GM10248 (cell line): ENCODE measurements at regions of chr14 and their contacts with region 1.

Region 1: GRCh38 chr14:24114536-24115450 is at the starts of genes DCAF11 and NRL:
- DNase-seq: peak; percentile 98
- CTCF ChIP-seq: no peak

Region 2: DNA sequence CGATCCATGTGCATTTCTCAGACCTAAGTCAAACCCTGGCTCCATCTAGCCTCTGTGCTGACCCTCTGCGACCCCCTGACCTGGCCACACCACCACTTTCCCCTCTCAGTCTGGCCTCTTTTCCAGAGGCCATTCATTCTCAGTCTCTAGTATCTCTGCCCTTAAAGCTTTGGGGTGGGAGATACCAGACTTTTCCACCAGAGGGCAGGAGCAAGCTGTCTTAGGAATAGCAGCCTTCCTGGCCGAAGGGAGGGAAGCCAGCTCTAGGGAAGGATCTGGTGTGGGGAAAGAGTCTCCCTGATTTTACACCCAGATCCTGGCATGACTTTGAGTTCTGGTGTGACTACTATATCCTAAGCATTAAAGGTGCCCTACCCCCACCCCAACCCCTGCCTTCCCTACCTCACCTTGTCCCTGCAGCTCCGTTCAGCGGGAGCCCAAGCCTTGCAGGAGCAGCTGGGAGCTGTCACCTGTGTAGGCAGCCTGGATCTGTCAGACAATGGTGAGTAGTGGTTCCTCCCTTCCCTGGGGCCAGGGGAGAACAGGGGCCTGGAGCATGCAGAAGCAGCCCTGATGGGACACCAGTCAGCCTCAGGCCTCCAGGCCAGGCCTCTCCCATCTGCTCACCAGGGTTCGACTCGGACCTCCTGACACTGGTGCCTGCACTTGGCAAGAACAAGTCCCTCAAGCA is 56.4 kb before region 1 on chr14:
- CTCF ChIA-PET with region 1: interaction called, 26 read pairs
- POLR2A ChIA-PET with region 1: interaction called, 3 read pairs
- DNase-seq: peak; percentile 70
- CTCF ChIP-seq: peak; percentile 73

Region 3: DNA sequence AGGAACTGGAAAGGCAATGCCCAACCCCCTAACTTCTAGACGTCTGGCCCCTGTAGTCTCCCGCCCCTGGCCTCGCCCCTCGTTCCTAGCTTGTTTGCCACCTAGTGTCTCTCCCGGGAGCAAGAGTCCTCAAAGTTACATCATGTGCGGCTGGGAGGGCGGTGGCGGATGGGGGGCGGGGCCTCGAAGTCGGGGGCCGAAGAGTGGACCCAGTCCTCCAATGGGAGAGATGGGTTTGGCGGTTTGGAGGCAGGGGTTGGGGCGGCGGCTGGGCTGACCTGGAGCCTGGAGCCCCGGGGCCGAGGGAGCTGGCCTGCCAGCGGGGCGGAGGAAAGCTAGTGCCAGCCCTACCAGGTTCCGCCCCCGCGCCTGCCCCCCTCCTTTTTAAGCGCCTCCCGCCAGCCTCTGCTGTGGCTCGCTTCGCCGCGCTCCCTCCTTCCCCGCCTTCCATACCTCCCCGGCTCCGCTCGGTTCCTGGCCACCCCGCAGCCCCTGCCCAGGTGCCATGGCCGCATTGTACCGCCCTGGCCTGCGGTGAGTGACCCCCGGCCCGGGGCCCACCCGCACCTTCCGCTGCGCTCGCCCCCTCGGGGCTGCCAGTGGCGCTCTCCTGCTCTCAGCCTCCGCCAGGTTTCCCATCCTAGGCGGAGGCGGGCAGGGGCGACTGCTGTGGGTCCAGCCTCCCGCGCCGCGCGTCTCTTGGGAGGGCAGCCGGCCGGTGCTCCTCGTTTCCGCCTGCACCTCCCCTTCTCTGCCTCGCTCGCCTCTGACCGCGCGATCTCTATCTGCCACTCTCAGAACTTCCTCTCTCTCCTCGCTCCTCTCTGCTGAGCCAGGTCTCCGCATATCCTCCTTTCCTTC is 20.7 kb before region 1 on chr14 and contains the start of gene PCK2:
- CTCF ChIA-PET with region 1: interaction called, 246 read pairs
- POLR2A ChIA-PET with region 1: interaction called, 29 read pairs
- DNase-seq: peak; percentile 91
- CTCF ChIP-seq: no peak

Region 4: DNA sequence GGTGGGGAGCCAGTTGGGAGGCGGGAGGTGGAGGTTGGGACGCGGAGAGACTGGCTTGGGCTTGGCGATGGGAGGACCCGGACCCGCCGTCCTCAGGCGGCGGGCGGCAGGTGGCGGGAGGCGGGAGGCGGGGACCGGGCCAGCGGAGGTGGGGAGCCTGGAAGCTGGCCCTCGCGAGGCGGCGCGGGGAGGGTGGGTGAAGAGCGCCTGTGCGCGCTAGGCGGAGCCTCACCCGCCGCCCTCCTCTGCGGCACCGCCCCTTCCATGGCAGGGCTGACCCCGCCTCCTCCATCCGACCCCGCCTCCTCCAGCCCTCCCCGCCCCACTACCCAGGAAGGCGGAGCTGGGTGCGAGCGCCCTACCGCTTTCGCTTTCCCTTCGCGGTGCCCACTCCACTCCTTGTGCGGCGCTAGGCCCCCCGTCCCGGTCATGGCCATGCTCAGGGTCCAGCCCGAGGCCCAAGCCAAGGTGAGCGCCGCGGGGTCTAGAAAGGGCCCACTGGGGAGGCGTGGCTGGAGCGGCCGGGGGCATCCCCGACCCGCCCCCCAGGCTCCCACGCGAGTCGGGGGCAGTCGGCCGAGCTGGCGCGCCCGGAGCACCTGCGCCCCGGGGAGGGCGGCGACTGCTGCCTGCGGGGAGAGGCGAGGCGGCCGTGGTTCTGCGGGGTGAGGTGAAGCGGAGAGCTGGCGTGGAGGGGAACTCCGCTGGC is 21.2 kb after region 1 on chr14 and contains the start of gene PSME1:
- CTCF ChIA-PET with region 1: interaction called, 58 read pairs
- POLR2A ChIA-PET with region 1: interaction called, 28 read pairs
- DNase-seq: peak; percentile 97
- CTCF ChIP-seq: no peak

Region 5: GRCh38 chr14:24141097-24141880 is 26.5 kb after region 1 on chr14 and contains the start of gene EMC9:
- CTCF ChIA-PET with region 1: interaction called, 22 read pairs
- POLR2A ChIA-PET with region 1: interaction called, 28 read pairs
- DNase-seq: peak; percentile 95
- CTCF ChIP-seq: peak; percentile 13

Region 6: GRCh38 chr14:24146978-24147760 is 32.4 kb after region 1 on chr14 and contains the start of gene RNF31:
- CTCF ChIA-PET with region 1: interaction called, 22 read pairs
- POLR2A ChIA-PET with region 1: interaction called, 20 read pairs
- DNase-seq: peak; percentile 97
- CTCF ChIP-seq: no peak